CD8-positive, alpha-beta memory T cell (primary cell): ENCODE measurements at regions of chr10 and their contacts with region 1.

Region 1: DNA sequence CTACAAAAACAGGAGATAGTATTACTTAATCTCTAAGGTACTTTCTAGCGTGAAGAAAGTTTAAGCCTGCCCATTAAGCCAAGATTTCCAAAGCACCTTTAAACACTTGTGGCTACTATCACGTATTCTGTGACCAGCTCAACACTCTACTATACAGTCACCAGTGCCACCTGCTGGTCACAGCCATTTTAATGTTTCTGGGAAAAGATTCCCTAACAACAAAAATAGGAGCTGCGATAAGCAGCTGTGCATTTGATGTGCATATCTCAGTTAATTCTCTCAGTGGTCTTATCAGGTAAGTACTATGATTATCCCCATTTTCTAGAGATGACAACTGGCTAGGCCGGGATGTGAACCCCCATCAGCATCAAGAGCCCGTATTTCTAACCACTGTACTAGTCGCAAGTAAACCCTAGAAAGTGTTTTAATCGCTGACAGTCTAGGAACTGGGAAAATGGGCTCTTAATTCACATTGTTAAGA is 860 bp downstream of the SEC31B start:
- DNase-seq: peak; percentile 36 to 64 (median 49)
- H3K4me3 ChIP-seq: no peak overlapping the region
- H3K4me3 Mint-ChIP-seq: no peak overlapping the region
- H3K27ac ChIP-seq: no peak overlapping the region
- H3K27ac Mint-ChIP-seq: peak overlapping the region in 5 of 8 donors; percentile 5 to 77 (median 45)
- H3K4me1 ChIP-seq: peaks cover 10% of the 10 kb centered on the region
- H3K4me1 Mint-ChIP-seq: peaks cover 6 to 10% (median 7%) of the 10 kb centered on the region in 3 donors
- H3K27me3 ChIP-seq: no peaks in the 10 kb centered on the region
- H3K27me3 Mint-ChIP-seq: no peaks in the 10 kb centered on the region

Region 2: DNA sequence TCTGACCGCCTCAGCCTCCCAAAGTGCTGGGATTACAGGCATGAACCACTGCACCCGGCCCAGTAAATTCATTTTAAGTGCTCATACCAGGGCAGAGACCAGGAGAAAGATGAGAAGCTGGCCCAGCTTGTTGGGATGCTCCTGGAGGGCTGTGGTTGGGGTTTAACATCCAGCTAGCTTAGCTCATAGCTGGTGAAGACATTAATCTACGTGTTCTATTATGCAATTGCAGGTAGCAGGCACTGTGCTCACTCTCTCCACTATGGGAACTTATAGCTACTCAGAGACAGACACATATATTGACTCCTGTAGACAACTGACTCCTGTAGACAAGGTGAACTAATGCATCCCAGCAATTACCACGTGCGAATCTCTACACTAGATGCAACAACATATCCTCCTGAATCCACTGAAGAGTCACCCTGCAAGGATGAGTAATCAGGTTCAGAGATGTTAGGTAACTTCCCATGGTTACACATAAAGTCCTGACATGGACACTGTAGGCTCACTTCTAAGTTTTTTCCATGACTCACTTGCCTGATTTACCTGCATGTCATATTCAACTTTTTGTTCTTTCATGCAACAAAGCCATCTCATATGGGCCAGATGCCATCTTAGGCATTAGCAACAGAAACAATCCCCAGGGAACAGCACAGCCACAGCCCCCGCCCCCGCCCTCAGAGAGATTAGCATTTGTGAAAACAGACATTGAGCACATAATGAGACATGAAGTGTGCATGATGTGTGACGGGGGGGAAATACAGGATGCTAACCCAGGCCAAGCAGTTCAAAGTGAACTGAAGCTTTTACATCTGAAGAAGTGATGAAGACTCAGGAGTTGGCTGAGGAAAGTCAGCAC is 370.2 kb before region 1 on chr10:
- CTCF ChIA-PET with region 1: no interaction called
- POLR2A ChIA-PET with region 1: no interaction called
- DNase-seq: no peak
- H3K4me3 ChIP-seq: no peak overlapping the region
- H3K4me3 Mint-ChIP-seq: no peak overlapping the region
- H3K27ac ChIP-seq: no peak overlapping the region
- H3K27ac Mint-ChIP-seq: peak overlapping the region in 2 of 8 donors; percentile 1 to 39
- H3K4me1 ChIP-seq: no peaks in the 10 kb centered on the region
- H3K4me1 Mint-ChIP-seq: no peaks in the 10 kb centered on the region
- H3K27me3 ChIP-seq: no peaks in the 10 kb centered on the region
- H3K27me3 Mint-ChIP-seq: peaks cover 0 to 7% of the 10 kb centered on the region in 2 donors

Region 3: DNA sequence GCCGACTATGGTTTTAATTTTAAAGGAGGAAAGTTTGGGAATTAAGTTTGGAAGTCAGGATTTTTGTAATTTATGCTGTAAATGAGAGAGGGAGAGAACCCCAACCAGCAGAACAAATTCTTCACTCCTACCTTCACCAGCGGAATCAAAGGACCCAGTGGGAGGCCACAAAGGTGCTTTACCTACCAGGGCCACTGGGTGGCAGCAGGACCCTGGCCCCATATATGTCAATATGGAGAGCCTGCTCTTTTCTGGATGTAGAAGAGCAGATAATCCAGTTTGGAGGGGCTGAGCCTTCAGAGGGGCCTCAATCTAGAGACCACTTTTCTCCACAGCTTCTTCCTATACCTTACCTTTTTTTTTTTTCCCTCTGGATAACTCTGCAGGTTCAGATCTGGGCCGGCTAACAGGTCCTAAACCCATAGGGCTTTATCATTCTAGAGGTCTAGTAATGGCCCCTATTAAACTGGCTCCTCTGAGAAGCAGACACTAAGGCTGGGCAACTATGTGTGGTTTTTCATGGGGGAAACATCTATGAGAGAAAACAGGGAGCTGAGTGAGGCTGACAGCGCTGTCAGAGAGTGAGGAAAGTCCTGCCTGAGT is 180.3 kb before region 1 on chr10:
- CTCF ChIA-PET with region 1: interaction called, 20 read pairs
- POLR2A ChIA-PET with region 1: no interaction called
- DNase-seq: peak; percentile 63 to 80 (median 69)
- H3K4me3 ChIP-seq: no peak overlapping the region
- H3K4me3 Mint-ChIP-seq: no peak overlapping the region
- H3K27ac ChIP-seq: no peak overlapping the region
- H3K27ac Mint-ChIP-seq: peak overlapping the region in 2 of 8 donors; percentile 9 to 32
- H3K4me1 ChIP-seq: no peaks in the 10 kb centered on the region
- H3K4me1 Mint-ChIP-seq: no peaks in the 10 kb centered on the region
- H3K27me3 ChIP-seq: no peaks in the 10 kb centered on the region
- H3K27me3 Mint-ChIP-seq: peaks cover 8 to 18% of the 10 kb centered on the region in 2 donors

Region 4: DNA sequence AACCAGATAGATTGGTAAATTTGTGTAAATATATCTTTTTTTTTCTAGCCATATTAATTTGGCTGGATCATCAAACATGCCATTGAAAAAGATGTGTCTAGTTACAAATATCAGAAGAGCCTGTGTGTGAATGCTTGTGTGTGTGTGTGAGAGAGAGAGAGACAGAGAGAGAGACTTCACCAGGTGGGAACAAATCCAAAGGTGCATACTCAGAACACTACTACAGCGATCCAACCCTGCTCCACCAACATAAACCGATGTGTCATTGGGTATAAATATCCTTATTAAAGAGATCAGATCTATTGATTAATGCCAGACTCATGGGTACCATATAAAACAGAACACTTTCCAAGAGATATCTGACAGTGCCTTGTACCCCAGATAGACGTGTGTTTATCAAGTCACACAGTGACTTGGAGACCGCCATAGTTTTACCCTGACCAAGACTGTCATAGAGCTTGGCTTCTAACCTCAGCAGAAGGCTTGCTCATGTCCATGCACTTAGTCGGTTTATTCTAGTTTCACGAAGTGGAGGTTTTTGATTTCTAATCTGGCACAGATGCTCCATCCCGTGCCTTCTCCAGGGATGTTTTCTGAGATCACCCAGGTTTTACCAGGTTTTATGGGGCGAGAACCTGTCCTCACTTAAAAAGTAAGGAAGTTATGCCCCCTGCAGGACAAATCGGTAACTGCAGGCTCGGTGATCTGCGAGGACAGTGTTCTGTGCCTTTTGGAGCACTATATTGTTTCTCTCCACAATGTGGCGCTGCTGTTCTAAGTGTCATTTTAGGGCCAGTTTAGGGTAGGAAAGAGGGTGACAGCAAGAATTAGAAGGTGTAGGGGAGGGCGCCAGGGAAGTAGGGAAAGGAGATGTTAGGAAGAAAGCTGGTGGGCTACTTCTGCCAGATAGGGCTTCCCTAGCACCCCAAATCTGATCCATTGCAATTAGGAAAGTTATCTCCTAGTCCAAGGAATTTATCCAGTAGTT is 85.3 kb before region 1 on chr10:
- CTCF ChIA-PET with region 1: interaction called, 23 read pairs
- POLR2A ChIA-PET with region 1: no interaction called
- DNase-seq: peak; percentile 84 to 94 (median 92)
- H3K4me3 ChIP-seq: no peak overlapping the region
- H3K4me3 Mint-ChIP-seq: no peak overlapping the region
- H3K27ac ChIP-seq: no peak overlapping the region
- H3K27ac Mint-ChIP-seq: no peak overlapping the region
- H3K4me1 ChIP-seq: no peaks in the 10 kb centered on the region
- H3K4me1 Mint-ChIP-seq: peaks cover 0 to 1% (median 0%) of the 10 kb centered on the region in 3 donors
- H3K27me3 ChIP-seq: no peaks in the 10 kb centered on the region
- H3K27me3 Mint-ChIP-seq: peaks cover 0 to 1% of the 10 kb centered on the region in 2 donors

Region 5: DNA sequence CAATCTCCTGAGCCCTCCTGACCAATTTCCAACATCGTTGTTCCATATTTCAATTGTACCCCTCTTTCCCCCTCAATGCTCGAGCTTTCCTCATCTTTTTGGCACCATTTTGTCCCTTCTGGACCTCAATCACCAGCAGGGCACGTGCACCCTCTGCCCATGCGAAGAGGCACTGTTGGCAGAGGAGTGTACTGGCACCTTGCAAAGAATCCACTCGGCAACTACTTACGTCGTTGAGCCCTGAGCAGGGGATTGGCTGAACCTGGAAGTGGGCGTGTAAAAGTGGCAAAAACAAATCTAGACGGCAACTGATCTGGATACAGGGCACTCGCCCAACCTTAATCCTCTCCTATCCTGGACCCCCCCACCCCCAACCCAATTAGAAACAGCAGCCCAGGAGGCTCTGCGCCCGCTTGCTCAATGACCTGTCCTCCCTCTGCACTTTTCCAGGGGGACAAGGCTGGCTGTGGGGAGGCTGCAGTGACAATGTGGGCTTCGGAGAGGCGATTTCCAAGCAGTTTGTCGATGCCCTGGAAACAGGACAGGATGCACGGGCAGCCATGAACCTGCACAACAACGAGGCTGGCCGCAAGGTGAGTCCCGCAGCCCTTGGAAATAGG is 37.2 kb before region 1 on chr10:
- CTCF ChIA-PET with region 1: interaction called, 44 read pairs
- POLR2A ChIA-PET with region 1: interaction called, 4 read pairs
- DNase-seq: peak; percentile 75 to 92 (median 88)
- H3K4me3 ChIP-seq: peak overlapping the region; percentile 60
- H3K4me3 Mint-ChIP-seq: peak overlapping the region; percentile 15 to 93 (median 78)
- H3K27ac ChIP-seq: no peak overlapping the region
- H3K27ac Mint-ChIP-seq: peak overlapping the region in 3 of 8 donors; percentile 21 to 53 (median 52)
- H3K4me1 ChIP-seq: no peaks in the 10 kb centered on the region
- H3K4me1 Mint-ChIP-seq: peaks cover 11 to 15% (median 12%) of the 10 kb centered on the region in 3 donors
- H3K27me3 ChIP-seq: peaks cover 7% of the 10 kb centered on the region
- H3K27me3 Mint-ChIP-seq: peaks cover 12 to 27% of the 10 kb centered on the region in 2 donors

Region 6: DNA sequence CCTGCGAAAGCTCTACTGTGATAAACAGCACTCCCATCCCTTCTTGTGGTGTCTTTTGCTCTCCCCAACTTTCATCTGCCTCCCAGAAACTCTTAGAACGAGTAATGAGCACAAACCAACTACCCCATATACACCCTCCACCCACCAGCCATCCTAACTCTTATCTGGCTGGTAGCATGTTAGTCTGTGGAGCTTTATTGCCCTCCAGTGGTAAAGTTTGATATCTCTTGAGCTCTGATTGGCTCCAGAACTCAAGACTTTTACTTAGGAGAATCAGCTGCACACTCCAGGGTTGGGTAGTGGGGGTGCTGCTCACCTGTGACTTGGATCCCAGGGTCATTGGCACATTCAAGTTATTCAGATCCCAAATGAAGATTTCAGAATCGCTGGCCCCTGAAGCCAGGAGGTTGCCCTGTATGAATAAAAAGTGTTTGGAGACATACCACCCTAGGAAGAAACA is 10.1 kb before region 1 on chr10:
- CTCF ChIA-PET with region 1: interaction called, 65 read pairs
- POLR2A ChIA-PET with region 1: interaction called, 3 read pairs
- DNase-seq: peak in 3 of 5 donors; percentile 56 to 73 (median 63)
- H3K4me3 ChIP-seq: no peak overlapping the region
- H3K4me3 Mint-ChIP-seq: peak overlapping the region; percentile 0 to 78 (median 71)
- H3K27ac ChIP-seq: no peak overlapping the region
- H3K27ac Mint-ChIP-seq: peak overlapping the region; percentile 65 to 97 (median 92)
- H3K4me1 ChIP-seq: peaks cover 50% of the 10 kb centered on the region
- H3K4me1 Mint-ChIP-seq: peaks cover 63 to 68% (median 63%) of the 10 kb centered on the region in 3 donors
- H3K27me3 ChIP-seq: no peaks in the 10 kb centered on the region
- H3K27me3 Mint-ChIP-seq: no peaks in the 10 kb centered on the region

Region 7: GRCh38 chr10:100529475-100530298 is 10.9 kb after region 1 on chr10 and contains the start of gene NDUFB8:
- CTCF ChIA-PET with region 1: interaction called, 35 read pairs
- POLR2A ChIA-PET with region 1: interaction called, 3 read pairs
- DNase-seq: peak; percentile 78 to 91 (median 80)
- H3K4me3 ChIP-seq: peak within 1 kb of the TSS; percentile 97
- H3K4me3 Mint-ChIP-seq: peak within 1 kb of the TSS; percentile 93 to 100 (median 99)
- H3K27ac ChIP-seq: peak within 1 kb of the TSS; percentile 83
- H3K27ac Mint-ChIP-seq: peak within 1 kb of the TSS; percentile 84 to 100 (median 99)
- H3K4me1 ChIP-seq: peaks cover 37% of the 10 kb centered on the region
- H3K4me1 Mint-ChIP-seq: peaks cover 26 to 41% (median 40%) of the 10 kb centered on the region in 3 donors
- H3K27me3 ChIP-seq: no peaks in the 10 kb centered on the region
- H3K27me3 Mint-ChIP-seq: no peaks in the 10 kb centered on the region
- total RNA-seq, gene NDUFB8: 242 to 246 TPM

Region 8: DNA sequence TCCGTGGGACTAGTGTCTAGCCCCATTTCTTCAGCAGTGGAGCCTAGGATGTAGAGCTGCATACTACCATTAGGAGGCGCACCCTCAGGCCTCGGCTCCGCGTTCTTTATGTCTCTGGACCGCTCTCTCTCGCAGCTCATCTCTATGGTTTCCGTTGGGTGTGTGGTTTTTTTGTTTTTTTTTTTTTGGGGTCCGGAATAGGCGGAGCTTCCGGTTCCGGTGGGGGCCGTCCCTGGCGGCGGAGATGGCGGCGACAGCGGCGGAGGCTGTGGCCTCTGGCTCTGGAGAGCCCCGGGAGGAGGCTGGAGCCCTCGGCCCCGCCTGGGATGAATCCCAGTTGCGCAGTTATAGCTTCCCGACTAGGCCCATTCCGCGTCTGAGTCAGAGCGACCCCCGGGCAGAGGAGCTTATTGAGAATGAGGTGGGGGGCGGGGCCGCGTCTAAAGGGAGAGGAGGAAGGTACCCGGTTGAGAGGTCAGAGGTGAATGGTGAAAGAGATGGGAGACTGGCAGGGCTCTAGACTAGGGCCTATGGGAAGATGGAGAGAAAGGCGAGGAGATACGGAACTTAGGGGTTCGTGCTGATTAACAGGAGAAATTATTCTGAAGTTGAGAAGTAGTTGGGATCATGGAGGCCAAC is 17.0 kb after region 1 on chr10 and contains the start of gene HIF1AN:
- CTCF ChIA-PET with region 1: interaction called, 14 read pairs
- POLR2A ChIA-PET with region 1: no interaction called
- DNase-seq: peak; percentile 76 to 93 (median 89)
- H3K4me3 ChIP-seq: peak within 1 kb of the TSS; percentile 78
- H3K4me3 Mint-ChIP-seq: peak within 1 kb of the TSS in 1 of 7 donors; percentile 13
- H3K27ac ChIP-seq: peak within 1 kb of the TSS; percentile 58
- H3K27ac Mint-ChIP-seq: peak within 1 kb of the TSS in 5 of 8 donors; percentile 11 to 84 (median 47)
- H3K4me1 ChIP-seq: peaks cover 36% of the 10 kb centered on the region
- H3K4me1 Mint-ChIP-seq: peaks cover 10 to 13% (median 13%) of the 10 kb centered on the region in 3 donors
- H3K27me3 ChIP-seq: no peaks in the 10 kb centered on the region
- H3K27me3 Mint-ChIP-seq: peaks cover 0 to 1% of the 10 kb centered on the region in 2 donors
- total RNA-seq, gene HIF1AN: 48.6 to 52.8 TPM